ENCODE measurements at regions of chr5 and their contacts with region 1.

Region 1: DNA sequence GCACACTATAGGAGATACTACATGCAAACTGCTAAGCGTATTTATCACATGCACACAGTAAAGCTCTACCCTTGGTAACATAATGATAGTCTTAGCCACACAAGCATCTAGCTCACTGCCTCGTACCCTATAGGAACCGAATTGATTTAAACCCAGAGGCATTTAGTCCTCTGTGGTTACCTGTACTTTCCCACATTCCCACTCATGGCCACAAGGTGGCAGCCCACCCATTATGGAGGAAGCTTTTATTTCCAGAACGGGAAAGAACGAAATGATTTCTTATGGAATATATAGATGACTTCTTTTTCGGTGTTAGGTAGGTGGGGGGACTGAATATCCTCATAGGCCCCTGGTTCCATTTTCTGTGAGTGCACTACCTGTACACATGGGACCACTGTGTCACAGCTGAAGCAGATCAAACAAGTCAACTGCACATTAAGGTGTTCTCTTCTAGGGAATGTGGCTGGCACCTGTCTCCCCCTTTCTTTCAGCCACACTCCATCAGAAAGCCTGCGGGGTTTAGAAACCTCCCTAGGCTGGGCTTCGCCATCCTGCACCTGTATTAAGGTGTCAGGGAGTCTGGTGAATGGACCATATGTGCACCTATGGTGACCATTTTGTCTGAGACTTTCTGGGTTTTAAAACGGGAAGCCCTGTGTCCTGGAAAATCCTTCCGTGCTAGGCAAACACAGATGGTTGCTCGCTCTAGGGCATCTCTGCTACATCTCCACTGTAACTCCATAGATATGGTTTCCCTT is 313.2 kb downstream of the SLIT3 start:
- DNase-seq: peak; percentile 18
- H3K4me3 Mint-ChIP-seq: no peak overlapping the region
- H3K27ac Mint-ChIP-seq: no peak overlapping the region
- H3K4me1 Mint-ChIP-seq: no peaks in the 10 kb centered on the region
- H3K27me3 Mint-ChIP-seq: peaks cover 4% of the 10 kb centered on the region

Region 2: GRCh38 chr5:168227973-168228615 is 759.6 kb before region 1 on chr5:
- intact Hi-C with region 1: no loop called
- DNase-seq: peak; percentile 14
- H3K4me3 Mint-ChIP-seq: no peak overlapping the region
- H3K27ac Mint-ChIP-seq: no peak overlapping the region
- H3K4me1 Mint-ChIP-seq: peaks cover 25% of the 10 kb centered on the region
- H3K27me3 Mint-ChIP-seq: peaks cover 34% of the 10 kb centered on the region

Region 3: GRCh38 chr5:168679515-168679920 is 308.2 kb before region 1 on chr5:
- intact Hi-C with region 1: loop called (anchors 1 kb)
- DNase-seq: peak; percentile 22
- H3K4me3 Mint-ChIP-seq: no peak overlapping the region
- H3K27ac Mint-ChIP-seq: no peak overlapping the region
- H3K4me1 Mint-ChIP-seq: peaks cover 7% of the 10 kb centered on the region
- H3K27me3 Mint-ChIP-seq: no peaks in the 10 kb centered on the region

Region 4: DNA sequence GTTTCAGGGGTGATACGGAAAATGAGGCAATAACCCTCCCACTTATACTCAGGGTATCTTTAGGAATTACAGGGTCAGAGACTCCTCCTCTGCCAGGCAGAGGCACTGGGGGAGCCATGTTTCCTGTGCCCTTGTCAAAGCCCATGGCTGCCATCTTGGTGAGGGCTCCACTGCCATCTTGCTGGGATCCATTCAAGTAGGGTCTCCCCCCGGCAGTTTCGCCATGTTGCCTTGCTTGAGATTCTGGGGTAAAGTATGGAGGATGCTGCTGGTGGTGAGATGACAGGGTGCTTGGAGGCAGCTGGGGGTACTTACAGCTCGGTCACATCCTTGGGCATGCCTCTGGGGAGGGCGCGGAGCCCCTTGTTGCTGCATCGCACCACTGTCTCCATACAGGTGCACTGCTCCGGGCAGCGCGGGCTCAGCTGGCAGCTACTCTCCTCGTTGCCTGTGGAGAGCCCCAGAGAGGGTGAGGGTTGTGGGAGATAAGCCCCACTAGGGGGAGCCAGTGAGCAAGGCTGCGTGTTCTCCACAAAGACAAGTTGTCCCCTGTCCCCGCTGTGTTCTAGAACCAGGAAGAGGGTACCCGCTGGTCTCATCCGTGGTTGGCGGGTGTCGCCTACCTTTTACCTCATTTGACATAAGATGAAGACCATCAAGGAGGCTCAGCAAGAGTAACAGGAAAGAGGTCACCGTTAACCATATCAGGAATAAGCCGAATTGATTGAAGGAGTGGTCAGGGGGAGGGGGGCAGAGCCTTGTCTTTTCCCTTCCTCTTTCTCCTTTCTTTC is 239.5 kb before region 1 on chr5:
- intact Hi-C with region 1: loop called (anchors 1 kb)
- DNase-seq: peak; percentile 17
- H3K4me3 Mint-ChIP-seq: no peak overlapping the region
- H3K27ac Mint-ChIP-seq: no peak overlapping the region
- H3K4me1 Mint-ChIP-seq: no peaks in the 10 kb centered on the region
- H3K27me3 Mint-ChIP-seq: peaks cover 4% of the 10 kb centered on the region

Region 5: GRCh38 chr5:169302491-169303118 is 314.9 kb after region 1 on chr5:
- intact Hi-C with region 1: loop called (anchors 1 kb)
- DNase-seq: peak; percentile 15
- H3K4me3 Mint-ChIP-seq: no peak overlapping the region
- H3K27ac Mint-ChIP-seq: no peak overlapping the region
- H3K4me1 Mint-ChIP-seq: peaks cover 9% of the 10 kb centered on the region
- H3K27me3 Mint-ChIP-seq: peaks cover 42% of the 10 kb centered on the region

Measured in activated T-helper 1 cell treated with anti-CD3 and anti-CD28 coated beads, Interleukin-12 subunit alpha, Interleukin-12 subunit beta, Interleukin-2, Interleukin-4 antibody, amounts not matched to agents 30 ng/mL and 10 ng/mL and 1 ng/mL, durations not matched to agents 14 hours and 24 hours and 36 hours (primary cell).